GM10248 (cell line): ENCODE measurements at regions of chr17 and their contacts with region 1.

Region 1: DNA sequence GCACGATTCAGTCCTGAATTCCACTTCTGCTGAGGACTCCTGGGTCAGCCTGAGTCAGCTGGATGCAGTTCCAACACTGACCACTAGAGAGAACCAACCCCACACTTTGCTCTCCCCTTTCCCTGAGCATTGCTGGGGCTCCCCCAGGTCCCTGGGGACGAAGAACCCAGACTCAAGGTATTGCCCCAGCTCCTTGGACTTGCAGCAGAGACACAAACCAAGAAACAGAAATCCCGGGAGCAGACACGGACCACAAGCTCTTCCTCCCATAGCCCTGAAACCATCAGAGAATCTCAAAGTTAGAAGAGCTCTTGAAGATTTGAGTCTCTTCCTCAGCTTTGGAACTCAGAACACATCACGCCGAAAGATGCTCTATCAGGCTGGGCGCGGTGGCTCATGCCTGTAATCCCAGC is 678 bp upstream of the GH1 start:
- DNase-seq: peak; percentile 85
- CTCF ChIP-seq: peak; percentile 89

Region 2: GRCh38 chr17:63773381-63774140 is 145.8 kb before region 1 on chr17 and contains the start of gene CCDC47:
- CTCF ChIA-PET with region 1: no interaction called
- POLR2A ChIA-PET with region 1: no interaction called
- DNase-seq: peak; percentile 99
- CTCF ChIP-seq: no peak

Region 3: GRCh38 chr17:63904316-63904715 is 15.0 kb before region 1 on chr17:
- CTCF ChIA-PET with region 1: interaction called, 51 read pairs
- POLR2A ChIA-PET with region 1: no interaction called
- DNase-seq: no peak
- CTCF ChIP-seq: no peak

Region 4: DNA sequence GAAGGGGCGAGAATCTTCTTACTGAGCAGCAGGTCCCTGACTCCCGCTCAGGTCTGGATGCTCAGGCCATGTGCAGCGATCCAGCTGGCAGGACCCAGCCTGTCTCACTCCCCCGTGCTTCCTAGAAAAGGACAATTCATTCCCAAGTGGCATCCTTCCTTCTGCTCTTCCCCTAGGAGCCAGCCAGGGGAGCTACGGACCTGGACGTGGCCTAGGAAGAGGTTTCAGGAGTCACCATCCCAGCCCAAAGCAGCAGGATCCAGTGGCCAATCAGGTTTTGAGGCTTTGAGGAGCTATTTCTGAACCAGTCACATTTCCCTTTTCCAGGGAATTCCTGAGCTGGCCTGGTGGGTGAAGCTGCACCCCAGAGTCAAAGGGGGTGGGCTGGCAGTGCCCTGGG is 20.6 kb after region 1 on chr17:
- CTCF ChIA-PET with region 1: interaction called, 15 read pairs
- POLR2A ChIA-PET with region 1: no interaction called
- DNase-seq: no peak
- CTCF ChIP-seq: no peak

Region 5: GRCh38 chr17:63966646-63967264 is 47.4 kb after region 1 on chr17:
- CTCF ChIA-PET with region 1: interaction called, 11 read pairs
- POLR2A ChIA-PET with region 1: no interaction called
- DNase-seq: peak; percentile 53
- CTCF ChIP-seq: no peak

Region 6: DNA sequence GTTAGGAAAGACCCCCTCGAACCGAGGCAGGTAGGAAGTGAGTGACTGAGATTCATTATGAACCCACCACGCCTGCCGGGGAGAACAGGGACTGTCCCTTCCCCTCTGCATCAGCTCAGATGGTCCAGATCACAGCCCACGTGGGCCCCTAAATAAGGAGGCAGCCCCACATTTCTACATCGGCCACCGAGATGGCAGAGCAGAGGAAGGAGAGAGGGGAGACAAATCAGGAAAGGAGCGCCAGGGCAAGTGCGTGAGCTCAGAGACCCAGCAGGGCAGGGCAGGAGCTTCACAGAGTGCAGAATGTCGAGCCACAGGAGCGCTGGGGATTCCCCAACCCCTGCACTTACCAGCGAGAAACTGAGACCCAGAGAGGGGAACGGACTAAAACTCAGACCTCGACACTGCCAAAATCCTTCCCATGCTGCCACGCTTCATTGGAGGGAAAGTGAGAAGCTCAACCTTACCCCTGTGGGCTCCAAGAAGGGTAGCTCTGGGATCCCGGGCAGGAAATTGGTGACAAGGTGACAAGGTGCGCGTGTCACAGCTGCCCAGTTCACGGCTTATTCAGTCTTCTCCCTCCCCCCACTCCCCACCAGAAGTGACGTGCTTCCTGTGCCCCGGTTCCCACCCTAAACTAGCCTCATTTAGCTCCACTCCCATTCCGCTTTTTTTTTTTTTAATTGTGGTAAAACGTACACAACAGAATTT is 100.9 kb after region 1 on chr17 and contains the start of gene ICAM2:
- CTCF ChIA-PET with region 1: interaction called, 160 read pairs
- POLR2A ChIA-PET with region 1: no interaction called
- DNase-seq: peak; percentile 70
- CTCF ChIP-seq: no peak

Region 7: DNA sequence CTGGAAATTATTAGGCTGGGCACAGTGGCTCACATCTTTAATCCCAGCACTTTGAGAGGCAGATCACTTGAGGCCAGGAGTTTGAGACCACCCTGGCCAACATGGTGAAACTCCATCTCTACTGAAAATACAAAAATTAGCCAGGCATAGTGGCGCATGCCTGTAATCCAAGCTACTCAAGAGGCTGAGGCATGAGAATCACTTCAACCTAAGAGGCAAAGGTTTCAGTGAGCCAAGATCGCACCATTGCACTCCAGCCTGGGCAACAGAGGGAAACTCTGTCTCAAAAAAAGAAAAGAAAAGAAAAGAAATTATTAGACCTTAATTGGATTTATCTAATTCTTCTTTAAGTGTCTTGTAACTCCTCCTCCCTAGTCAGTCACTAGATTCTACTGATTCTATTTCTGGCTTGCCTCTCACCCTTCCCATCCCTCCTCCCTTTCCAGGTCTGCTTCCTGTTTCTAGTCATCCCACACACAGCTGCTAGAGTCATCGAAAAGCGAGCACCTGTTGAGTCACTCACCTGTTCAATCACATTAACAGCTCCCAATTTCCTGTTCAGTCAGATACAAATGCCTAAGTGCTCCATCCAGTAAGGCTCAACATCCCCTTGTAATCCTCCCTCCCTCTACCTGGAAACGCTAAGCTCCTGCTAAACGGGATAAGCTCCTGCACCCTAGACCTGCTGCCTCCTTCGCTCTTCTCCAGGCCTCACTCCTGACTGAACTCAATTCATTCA is 176.0 kb after region 1 on chr17:
- CTCF ChIA-PET with region 1: no interaction called
- POLR2A ChIA-PET with region 1: no interaction called
- DNase-seq: no peak
- CTCF ChIP-seq: no peak